ENCODE measurements at regions of chr19 and their contacts with region 1.

Region 1: GRCh38 chr19:57599761-57600383 is at the start of gene ZNF530:
- H3K4me3 Mint-ChIP-seq: peak within 1 kb of the TSS; percentile 77
- H3K27ac Mint-ChIP-seq: peak within 1 kb of the TSS; percentile 65
- H3K4me1 Mint-ChIP-seq: peaks cover 17% of the 10 kb centered on the region
- H3K27me3 Mint-ChIP-seq: peaks cover 3% of the 10 kb centered on the region

Region 2: GRCh38 chr19:57560049-57560491 is 39.8 kb before region 1 on chr19:
- intact Hi-C with region 1: no loop called
- H3K4me3 Mint-ChIP-seq: peak overlapping the region; percentile 92
- H3K27ac Mint-ChIP-seq: peak overlapping the region; percentile 91
- H3K4me1 Mint-ChIP-seq: peaks cover 23% of the 10 kb centered on the region
- H3K27me3 Mint-ChIP-seq: peaks cover 13% of the 10 kb centered on the region

Region 3: DNA sequence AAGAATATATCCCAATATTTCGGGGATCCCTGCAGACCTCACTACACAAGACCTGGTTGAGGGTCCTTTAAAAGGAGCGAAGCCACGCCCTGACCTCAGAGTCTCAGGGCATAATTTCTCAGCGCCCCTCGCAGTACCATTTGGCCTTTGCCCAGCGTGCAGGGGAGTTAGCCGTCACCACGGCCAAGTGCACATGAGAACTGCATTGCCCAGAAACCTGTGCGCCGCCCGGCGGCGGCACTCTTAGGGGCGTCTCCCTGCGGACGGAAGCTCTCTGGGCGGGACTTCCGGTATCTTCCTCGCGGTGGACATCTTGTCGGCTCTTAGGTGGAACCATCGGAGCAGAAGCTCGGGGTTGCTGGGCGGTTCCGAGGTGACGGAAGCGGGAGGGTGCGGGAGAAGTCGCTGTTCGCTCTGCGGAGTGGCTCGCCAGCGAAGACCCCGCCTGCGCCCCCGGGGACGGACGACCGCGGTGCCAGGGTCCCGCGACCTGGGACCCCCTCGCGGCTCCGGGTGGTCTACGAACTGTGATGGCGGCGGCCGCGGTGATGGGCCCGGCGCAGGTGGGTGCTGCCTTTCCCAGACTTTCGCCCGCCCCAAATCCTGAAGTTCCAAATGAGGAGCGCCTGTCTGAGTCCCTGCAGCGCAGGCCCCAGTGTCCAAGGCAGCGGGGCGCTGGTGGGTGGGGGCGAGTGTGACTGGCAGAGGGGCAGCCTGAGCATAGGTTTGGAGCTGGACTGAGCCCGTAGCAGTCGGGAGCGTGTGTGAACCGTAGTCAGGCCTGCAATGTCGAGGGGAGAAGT is 14.3 kb after region 1 on chr19 and contains the start of gene ZNF134:
- intact Hi-C with region 1: loop called (anchors 1 kb)
- H3K4me3 Mint-ChIP-seq: peak within 1 kb of the TSS; percentile 93
- H3K27ac Mint-ChIP-seq: peak within 1 kb of the TSS; percentile 78
- H3K4me1 Mint-ChIP-seq: peaks cover 36% of the 10 kb centered on the region
- H3K27me3 Mint-ChIP-seq: peaks cover 2% of the 10 kb centered on the region

Measured in dendritic cell treated with granulocyte-macrophage colony-stimulating factor and Interleukin-4, amounts not matched to agents 40 ng/mL and 50 ng/mL, for 4 days (primary cell).